ENCODE measurements at regions of chr3 and their contacts with region 1.

Region 1: DNA sequence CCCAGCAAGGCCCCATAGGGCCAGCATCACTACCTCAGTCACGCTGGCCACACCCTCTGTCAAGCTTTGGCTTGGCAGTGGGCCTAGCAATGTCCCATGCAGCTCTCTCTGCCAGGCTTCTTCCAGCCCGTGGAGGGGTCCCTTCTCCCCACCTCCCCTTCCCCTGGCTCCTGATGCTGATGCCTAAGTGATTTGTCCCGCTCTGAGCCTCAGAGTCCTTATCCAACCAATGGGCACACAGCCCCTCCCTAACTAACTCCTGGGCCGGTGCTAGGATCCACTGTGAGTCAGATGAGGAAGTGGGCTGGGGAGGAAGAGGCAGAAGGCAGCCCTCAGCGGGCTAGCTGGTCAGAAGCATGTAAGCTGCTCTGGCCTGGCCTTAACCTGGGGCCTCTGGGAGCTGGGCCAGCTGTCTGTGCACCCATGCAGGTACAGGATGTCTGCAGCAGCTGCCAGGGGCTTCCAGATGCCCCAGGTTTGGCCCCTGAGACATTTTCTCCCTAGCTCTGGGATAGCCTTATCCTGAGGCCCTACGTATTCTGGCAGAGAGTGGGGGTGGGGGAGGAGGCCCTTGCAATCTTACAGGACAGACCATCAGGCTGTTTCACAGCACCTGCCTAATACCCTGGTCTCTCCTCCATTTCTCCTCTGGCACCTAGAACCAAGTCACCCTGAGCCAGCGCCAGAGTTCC is 740 bp upstream of the ZBTB47 start:
- DNase-seq: peak in 6 of 10 donors; percentile 54 to 77 (median 62)
- H3K4me3 ChIP-seq: peak overlapping the region; percentile 65 to 99 (median 90)
- H3K27ac ChIP-seq: peak overlapping the region; percentile 39 to 99 (median 95)
- H3K27me3 ChIP-seq: no peaks in the 10 kb centered on the region
- CTCF ChIP-seq: no peak

Region 2: DNA sequence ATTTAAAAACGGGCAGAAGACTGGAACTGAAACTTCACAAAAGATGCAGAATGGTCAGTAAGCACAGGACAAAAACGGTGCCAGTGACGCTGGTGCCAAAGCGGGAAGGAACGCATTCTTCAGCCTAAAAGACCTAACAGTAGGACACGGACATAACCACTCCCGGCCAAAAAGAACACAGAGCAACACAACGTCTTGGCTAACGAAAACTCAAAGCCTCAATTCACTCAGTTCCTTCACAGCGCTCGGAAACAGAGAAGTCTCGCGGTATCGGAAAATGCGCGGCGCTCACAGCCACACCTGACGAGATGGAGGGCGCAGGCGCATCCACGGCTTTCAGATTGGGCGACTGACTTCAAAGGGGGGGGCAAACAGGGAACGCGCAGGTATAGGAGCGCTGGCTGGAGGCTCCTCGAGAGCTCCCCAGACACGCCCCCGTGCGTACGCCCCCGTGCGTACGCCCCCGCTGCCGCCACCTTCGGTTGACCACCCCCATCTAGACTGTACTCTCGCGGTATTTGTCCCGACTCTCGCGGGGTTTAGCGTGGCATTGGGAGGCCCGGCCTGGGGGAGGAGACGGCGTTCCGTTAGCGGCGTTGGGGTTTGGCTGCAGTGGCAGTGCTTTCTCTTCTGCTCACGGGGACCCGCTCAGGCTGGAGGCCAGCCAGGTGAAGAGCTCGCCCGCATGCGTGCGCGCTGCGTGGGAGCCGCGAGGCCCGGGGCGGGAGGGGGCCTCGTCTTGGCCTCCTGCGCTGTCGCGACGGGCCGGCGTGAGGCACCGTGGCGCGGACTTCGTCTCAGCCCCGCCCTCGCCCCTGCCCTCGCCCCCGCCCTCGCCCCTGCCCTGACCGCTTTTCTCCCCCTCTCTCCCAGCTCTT is 52.4 kb before region 1 on chr3 and contains the start of gene NKTR:
- intact Hi-C with region 1: loop called (anchors 5 kb)
- DNase-seq: peak; percentile 87 to 97 (median 94)
- H3K4me3 ChIP-seq: peak within 1 kb of the TSS; percentile 67 to 97 (median 88)
- H3K27ac ChIP-seq: peak within 1 kb of the TSS; percentile 68 to 99 (median 96)
- H3K27me3 ChIP-seq: no peaks in the 10 kb centered on the region
- CTCF ChIP-seq: peak in 44 of 56 donors; percentile 2 to 58 (median 35)
- total RNA-seq, gene NKTR: 64.0 to 154 (median 107) TPM

Region 3: GRCh38 chr3:42690766-42691680 is 38.3 kb after region 1 on chr3:
- intact Hi-C with region 1: loop called in 1 of 2 experiments (anchors 5 kb)
- DNase-seq: peak in 4 of 10 donors; percentile 36 to 57 (median 49)
- H3K4me3 ChIP-seq: no peak overlapping the region
- H3K27ac ChIP-seq: peak overlapping the region; percentile 13 to 99 (median 79)
- H3K27me3 ChIP-seq: peaks cover 0 to 4% (median 0%) of the 10 kb centered on the region in 45 donors
- CTCF ChIP-seq: peak in 3 of 56 donors; percentile 13 to 17 (median 13)

Region 4: DNA sequence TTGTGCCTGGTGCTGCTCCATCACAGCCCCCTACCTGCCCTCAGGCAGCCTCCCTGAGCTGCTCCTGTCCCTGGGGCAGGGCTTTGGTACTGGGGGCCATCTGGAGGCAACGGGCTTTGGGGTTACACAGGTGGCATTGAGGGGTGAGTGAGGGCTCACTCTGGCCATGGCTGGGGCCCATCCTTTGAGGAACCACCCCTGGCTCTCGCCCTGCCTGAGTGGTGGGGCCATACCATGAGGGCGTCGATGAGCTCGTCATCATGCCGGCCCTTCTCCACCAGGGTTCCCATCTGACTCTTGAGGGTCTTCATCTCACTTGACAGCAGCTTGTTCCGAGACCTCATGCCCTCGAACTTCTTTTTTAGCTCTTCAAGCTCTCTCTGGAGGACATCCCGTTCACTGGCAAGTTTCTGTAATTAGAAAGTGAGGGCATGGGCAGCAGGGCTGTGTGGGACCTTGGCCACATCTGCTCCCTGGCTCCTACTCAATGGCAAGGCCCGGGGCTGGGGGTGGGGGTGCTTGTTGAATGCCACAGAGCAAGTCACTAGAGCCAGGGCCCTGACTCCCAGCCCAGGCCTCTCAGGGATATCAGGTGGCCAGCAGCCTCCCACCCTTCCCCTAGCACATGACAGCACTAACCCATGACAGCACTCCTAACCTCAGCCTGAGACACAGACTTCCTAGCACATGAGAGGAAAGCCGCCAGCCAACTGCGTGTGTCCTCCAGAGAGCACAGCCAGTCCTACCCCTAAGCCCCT is 86.8 kb after region 1 on chr3:
- intact Hi-C with region 1: loop called in 1 of 2 experiments (anchors 2 kb)
- DNase-seq: peak in 9 of 10 donors; percentile 70 to 93 (median 89)
- H3K4me3 ChIP-seq: no peak overlapping the region
- H3K27ac ChIP-seq: peak overlapping the region; percentile 69 to 100 (median 93)
- H3K27me3 ChIP-seq: no peaks in the 10 kb centered on the region
- CTCF ChIP-seq: peak in 1 of 56 donors; percentile 18

Region 5: DNA sequence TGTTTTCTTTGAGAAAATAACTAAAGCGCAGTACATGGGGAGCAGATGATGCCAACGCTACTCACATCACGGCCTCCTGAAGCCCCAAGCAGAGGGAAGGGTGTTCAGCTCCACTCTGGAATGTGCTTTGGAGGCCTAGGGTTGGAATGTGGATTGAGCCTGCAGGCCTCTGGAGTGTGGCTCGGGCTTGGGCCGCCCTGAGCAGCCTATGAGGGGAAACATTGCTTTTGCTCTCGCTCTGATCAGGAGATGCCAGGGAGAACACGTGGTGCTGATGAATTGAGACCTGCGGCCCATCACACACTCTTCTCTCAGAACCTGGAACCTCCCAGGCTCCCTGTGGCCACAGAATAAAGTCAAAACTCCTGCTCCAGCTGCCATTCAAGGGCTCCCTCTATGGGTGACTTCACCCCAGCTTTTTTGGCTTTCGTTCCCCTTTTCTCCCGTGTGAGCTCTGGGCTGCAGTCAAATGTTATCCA is 97.0 kb after region 1 on chr3:
- intact Hi-C with region 1: loop called in 1 of 2 experiments (anchors 2 kb)
- DNase-seq: peak in 2 of 10 donors; percentile 58 to 59
- H3K4me3 ChIP-seq: no peak overlapping the region
- H3K27ac ChIP-seq: peak overlapping the region in 43 of 59 donors; percentile 5 to 100 (median 60)
- H3K27me3 ChIP-seq: no peaks in the 10 kb centered on the region
- CTCF ChIP-seq: peak in 55 of 56 donors; percentile 46 to 80 (median 68)

Measured in dorsolateral prefrontal cortex (tissue), 120 donors.